Vagina (tissue), 2 donors: ENCODE measurements at regions of chr16 and their contacts with region 1.

Region 1: GRCh38 chr16:80250376-80250775 is 290.4 kb upstream of the DYNLRB2 start:
- DNase-seq: no peak
- H3K4me3 ChIP-seq: no peak overlapping the region
- H3K27ac ChIP-seq: no peak overlapping the region
- H3K4me1 ChIP-seq: no peaks in the 10 kb centered on the region
- H3K27me3 ChIP-seq: no peaks in the 10 kb centered on the region
- CTCF ChIP-seq: no peak
- POLR2A ChIP-seq: no peak

Region 2: GRCh38 chr16:80265624-80266306 is 15.4 kb after region 1 on chr16:
- intact Hi-C with region 1: loop called (anchors 1 kb)
- DNase-seq: no peak
- H3K4me3 ChIP-seq: no peak overlapping the region
- H3K27ac ChIP-seq: no peak overlapping the region
- H3K4me1 ChIP-seq: no peaks in the 10 kb centered on the region
- H3K27me3 ChIP-seq: no peaks in the 10 kb centered on the region
- CTCF ChIP-seq: no peak
- POLR2A ChIP-seq: no peak